Activated naive CD4-positive, alpha-beta T cell treated with anti-CD3 and anti-CD28 coated beads for 36 hours (primary cell): ENCODE measurements at regions of chr19 and their contacts with region 1.

Region 1: DNA sequence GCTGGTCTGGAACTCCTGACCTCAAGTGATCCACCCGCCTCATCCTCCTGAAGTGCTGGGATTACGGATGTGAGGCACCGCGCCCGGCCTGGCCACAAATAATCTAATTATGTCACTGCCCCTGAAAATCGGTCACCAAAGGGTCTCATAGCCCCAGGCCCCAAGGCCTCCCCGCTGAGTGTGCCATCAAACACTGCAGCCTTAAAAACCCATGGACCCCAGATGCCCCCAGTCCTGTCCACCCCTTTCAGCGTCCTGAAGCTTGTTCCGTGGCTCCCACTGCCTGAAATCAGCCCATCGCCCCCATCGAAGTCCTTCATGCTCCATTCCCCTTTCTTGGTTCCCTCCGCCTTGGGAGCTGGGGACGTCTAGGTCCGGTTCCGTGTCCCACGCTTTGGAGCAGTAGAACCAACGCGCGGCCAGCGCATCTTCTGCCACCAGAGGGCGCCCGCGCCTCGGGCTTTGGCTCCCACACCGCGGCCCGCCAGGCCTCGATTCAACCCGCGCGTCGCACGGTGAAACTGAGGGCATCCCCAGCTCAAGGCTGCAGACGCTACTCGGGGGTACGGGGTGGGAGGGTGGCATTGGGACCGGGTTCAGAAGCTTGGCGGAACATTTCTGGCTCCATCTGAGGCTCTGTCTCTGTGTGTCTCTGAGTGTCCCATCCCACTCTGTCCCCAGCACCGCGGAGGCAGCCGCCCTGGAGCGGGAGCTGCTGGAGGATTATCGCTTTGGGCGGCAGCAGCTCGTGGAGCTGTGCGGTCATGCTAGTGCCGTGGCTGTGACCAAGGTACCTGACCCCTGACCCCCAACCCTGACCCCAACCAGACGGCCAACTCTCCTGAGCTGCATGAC is 3.5 kb downstream of the YJEFN3 start:
- DNase-seq: peak; percentile 88
- H3K4me3 Mint-ChIP-seq: no peak overlapping the region
- H3K27ac Mint-ChIP-seq: no peak overlapping the region
- H3K4me1 Mint-ChIP-seq: peaks cover 12% of the 10 kb centered on the region
- H3K27me3 Mint-ChIP-seq: no peaks in the 10 kb centered on the region

Region 2: DNA sequence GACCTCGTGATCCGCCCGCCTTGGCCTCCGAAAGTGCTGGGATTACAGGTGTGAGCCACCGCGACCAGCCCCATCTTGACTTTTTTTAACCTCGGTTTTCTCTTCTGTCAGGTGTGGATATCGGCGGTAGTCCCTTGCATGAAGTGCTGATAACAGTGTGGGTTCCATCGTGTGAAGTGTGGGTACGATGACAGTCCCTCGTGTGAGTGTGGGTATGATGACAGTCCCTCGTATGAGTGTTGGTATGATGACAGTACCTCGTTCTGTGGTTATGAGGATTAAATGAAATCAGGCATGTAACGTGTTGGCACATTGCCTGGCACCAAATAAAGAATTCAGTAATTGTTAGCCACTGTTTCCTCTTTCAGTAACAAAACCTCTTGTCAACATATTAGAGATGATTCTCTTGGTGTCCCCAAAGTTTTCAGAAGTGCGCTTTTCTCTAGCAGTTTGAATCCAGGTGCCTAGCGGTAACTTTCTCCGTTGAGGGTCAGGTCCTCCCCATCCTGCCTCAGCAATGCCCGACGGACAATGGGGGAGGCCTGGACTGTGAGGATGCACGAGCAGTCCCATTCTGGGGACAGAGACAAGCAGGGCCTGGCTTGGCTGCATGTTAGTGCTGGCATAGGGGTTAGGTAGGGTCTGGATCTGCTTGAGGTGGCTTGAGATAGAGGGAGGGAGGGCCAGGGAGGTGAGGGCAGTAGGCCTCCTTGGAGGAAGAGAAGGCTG is 111.4 kb before region 1 on chr19:
- CTCF ChIA-PET with region 1: no interaction called
- intact Hi-C with region 1: no loop called
- DNase-seq: no peak
- H3K4me3 Mint-ChIP-seq: no peak overlapping the region
- H3K27ac Mint-ChIP-seq: no peak overlapping the region
- H3K4me1 Mint-ChIP-seq: peaks cover 75% of the 10 kb centered on the region
- H3K27me3 Mint-ChIP-seq: no peaks in the 10 kb centered on the region

Region 3: DNA sequence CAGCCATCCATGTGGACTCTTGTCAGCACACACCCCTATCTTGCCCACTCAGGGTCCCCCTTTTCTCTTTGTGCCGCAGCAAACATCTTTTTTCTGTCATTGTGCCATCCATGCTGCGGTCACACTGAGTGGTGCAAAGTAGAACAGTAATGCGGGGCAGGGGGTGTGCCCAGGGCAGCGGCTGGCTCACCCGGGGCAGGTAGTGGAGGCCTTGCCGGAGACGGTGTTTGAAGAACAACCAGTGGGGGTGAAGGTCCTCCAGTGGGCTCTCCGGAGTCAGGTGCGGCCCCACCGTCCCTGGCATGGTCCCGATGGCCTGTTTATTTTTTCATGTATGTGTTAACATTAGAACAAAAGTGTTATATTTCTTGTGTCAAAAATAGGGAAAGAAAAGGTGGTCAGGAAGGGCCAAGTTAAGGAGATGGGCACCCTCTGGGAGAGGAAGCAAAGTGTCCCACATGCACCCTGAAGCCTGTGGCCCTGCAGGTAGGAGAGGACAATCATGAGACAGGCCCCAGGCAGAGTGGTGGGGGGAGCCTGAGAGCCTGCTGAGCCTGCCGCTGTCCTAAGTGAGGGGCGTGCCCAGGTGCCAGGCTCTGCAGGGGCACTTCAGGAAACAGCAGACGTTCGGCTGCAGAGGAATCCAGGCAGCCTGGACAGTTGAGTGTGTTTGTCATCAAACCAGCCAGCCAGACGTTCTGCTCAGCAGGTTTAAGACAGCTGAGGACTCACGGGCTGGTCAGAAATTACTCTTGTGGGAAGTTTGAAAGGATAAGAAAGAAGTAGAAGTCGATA is 29.2 kb before region 1 on chr19:
- CTCF ChIA-PET with region 1: no interaction called
- intact Hi-C with region 1: no loop called
- DNase-seq: no peak
- H3K4me3 Mint-ChIP-seq: no peak overlapping the region
- H3K27ac Mint-ChIP-seq: no peak overlapping the region
- H3K4me1 Mint-ChIP-seq: no peaks in the 10 kb centered on the region
- H3K27me3 Mint-ChIP-seq: no peaks in the 10 kb centered on the region

Region 4: GRCh38 chr19:19554074-19555023 is 22.2 kb after region 1 on chr19:
- CTCF ChIA-PET with region 1: interaction called, 35 read pairs
- intact Hi-C with region 1: loop called (anchors 2 kb)
- DNase-seq: peak; percentile 75
- H3K4me3 Mint-ChIP-seq: no peak overlapping the region
- H3K27ac Mint-ChIP-seq: no peak overlapping the region
- H3K4me1 Mint-ChIP-seq: peaks cover 10% of the 10 kb centered on the region
- H3K27me3 Mint-ChIP-seq: no peaks in the 10 kb centered on the region

Region 5: GRCh38 chr19:19627621-19628500 is 95.7 kb after region 1 on chr19 and contains the start of gene LPAR2:
- CTCF ChIA-PET with region 1: interaction called, 10 read pairs
- intact Hi-C with region 1: no loop called
- DNase-seq: peak; percentile 65
- H3K4me3 Mint-ChIP-seq: peak within 1 kb of the TSS; percentile 89
- H3K27ac Mint-ChIP-seq: peak within 1 kb of the TSS; percentile 85
- H3K4me1 Mint-ChIP-seq: peaks cover 29% of the 10 kb centered on the region
- H3K27me3 Mint-ChIP-seq: no peaks in the 10 kb centered on the region
- total RNA-seq, gene LPAR2: 20.2 to 20.7 TPM

Region 6: GRCh38 chr19:19651076-19651475 is 118.9 kb after region 1 on chr19:
- CTCF ChIA-PET with region 1: interaction called, 46 read pairs
- intact Hi-C with region 1: no loop called
- DNase-seq: no peak
- H3K4me3 Mint-ChIP-seq: no peak overlapping the region
- H3K27ac Mint-ChIP-seq: no peak overlapping the region
- H3K4me1 Mint-ChIP-seq: no peaks in the 10 kb centered on the region
- H3K27me3 Mint-ChIP-seq: no peaks in the 10 kb centered on the region

Region 7: DNA sequence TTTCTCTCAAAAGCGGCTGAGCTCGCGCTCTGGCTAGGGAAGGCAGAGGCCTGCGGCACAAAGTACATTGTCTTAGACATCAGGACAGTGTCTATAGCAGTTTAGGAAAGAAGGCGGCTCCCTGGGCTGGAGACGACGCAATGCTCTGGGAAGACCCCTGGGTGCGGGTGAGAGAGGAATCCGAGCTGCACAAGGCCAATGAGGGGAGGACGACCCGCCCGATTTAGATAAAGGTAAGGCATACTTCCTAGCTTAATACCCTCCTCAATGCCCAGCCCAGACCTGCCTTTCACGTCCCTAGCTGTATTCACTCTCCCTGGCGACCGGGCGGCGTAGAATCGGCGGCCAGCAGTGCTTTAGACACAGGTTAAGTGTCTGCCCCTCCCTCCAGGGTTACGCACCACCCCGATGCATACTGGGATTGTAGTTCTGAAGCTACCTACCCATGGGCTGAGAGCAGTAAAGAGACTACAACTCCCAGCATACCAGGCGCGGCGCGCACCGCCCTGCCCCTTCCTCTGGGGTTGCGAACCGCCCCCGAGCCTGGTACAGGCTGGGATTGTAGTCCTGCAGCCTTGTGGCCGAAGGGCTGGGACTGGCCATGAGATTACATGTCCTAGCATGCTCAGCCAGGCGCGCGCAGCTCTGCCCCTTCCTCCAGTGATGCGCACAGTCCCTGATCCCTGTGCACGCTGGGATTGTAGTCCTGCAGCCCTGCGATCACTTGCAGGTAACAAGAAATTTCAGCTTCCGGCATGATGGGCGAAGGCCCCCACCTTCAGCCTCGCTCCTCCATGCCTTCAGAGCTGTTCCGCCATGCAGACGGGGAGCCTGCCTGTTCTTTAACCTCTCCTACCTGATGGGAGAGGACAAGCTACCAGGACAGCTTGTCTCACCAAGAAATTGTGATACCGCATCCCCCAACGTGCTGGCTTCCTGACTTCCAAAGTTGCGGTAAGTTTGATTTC is 244.1 kb after region 1 on chr19:
- CTCF ChIA-PET with region 1: interaction called, 3 read pairs
- intact Hi-C with region 1: loop called (anchors 10 kb)
- DNase-seq: peak; percentile 95
- H3K4me3 Mint-ChIP-seq: peak overlapping the region; percentile 90
- H3K27ac Mint-ChIP-seq: peak overlapping the region; percentile 90
- H3K4me1 Mint-ChIP-seq: peaks cover 44% of the 10 kb centered on the region
- H3K27me3 Mint-ChIP-seq: no peaks in the 10 kb centered on the region

Region 8: GRCh38 chr19:19956434-19957075 is 424.4 kb after region 1 on chr19:
- CTCF ChIA-PET with region 1: interaction called, 5 read pairs
- intact Hi-C with region 1: loop called (anchors 1 kb)
- DNase-seq: peak; percentile 9
- H3K4me3 Mint-ChIP-seq: no peak overlapping the region
- H3K27ac Mint-ChIP-seq: no peak overlapping the region
- H3K4me1 Mint-ChIP-seq: no peaks in the 10 kb centered on the region
- H3K27me3 Mint-ChIP-seq: no peaks in the 10 kb centered on the region